Common myeloid progenitor, CD34-positive (primary cell): ENCODE measurements at regions of chr4 and their contacts with region 1.

Region 1: DNA sequence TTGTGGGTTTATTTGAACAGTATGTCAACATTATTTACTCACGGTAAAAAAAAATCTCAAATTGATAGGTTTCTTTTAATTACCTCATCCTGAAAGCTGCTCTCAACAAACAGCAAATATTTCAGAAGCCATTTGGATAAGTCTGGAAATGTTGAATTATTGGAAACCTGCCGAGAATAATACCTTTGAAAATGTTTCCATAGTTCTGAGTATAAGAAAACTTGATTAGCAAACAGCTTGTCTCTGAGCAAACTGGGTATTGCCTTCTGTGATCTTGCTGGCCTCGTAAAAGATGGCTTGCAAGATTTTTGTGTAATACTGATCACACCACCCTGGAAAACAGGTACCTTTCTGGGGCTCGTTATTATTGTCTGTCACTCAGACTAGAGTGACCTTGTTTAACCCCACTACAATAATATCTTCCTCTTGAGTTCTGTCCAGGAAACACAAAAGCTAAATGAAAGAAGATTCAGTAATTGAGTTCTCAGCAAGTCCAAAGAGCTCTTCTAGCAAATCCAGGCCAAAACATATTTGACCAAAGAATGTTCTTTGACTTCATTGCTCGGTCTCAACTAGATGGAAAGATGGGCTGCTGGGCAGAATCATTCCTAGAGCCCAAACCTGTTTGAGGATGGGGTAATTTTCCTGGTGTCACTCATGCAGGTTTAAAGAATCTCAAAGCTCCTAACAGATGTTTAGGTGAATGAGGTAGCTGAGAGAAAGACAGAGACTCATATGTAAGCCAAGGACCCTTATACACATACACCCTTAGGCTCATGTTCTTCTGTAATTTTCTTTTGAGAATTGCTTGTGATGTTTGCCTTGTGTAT is 255.6 kb upstream of the JADE1 start:
- DNase-seq: peak in 1 of 3 donors; percentile 36
- H3K4me3 ChIP-seq: peak overlapping the region in 6 of 7 experiments; percentile 63 to 96 (median 80)
- H3K27ac ChIP-seq: peak overlapping the region in 1 of 2 experiments; percentile 75
- H3K4me1 ChIP-seq: peaks cover 4 to 14% (median 12%) of the 10 kb centered on the region in 4 experiments
- H3K27me3 ChIP-seq: no peaks in the 10 kb centered on the region

Region 2: DNA sequence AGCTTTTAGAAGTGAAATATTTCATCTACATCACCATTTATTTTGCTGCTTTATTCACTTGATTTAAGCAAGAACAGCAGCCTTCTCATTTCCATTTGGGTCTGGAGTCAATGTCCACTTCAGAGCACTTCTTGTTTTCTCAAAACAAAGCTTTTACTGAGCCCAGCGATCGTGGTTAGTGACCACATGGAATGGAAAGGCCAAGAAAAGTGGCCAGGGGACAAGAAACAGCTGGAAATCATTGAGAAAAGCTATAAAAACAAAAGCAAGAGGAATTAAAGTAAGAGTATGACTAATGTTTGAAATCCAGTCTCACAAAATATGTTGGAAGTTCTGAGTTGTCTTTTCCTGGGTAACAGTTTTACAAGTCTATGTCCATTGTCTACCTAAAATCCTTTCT is 1249.5 kb before region 1 on chr4:
- CTCF ChIA-PET with region 1: no interaction called
- POLR2A ChIA-PET with region 1: no interaction called
- DNase-seq: no peak
- H3K4me3 ChIP-seq: no peak overlapping the region
- H3K27ac ChIP-seq: no peak overlapping the region
- H3K4me1 ChIP-seq: no peaks in the 10 kb centered on the region
- H3K27me3 ChIP-seq: no peaks in the 10 kb centered on the region

Region 3: GRCh38 chr4:128538111-128538882 is 15.6 kb before region 1 on chr4:
- CTCF ChIA-PET with region 1: no interaction called
- POLR2A ChIA-PET with region 1: no interaction called
- DNase-seq: no peak
- H3K4me3 ChIP-seq: no peak overlapping the region
- H3K27ac ChIP-seq: no peak overlapping the region
- H3K4me1 ChIP-seq: no peaks in the 10 kb centered on the region
- H3K27me3 ChIP-seq: no peaks in the 10 kb centered on the region

Region 4: GRCh38 chr4:128564081-128564630 is 10.3 kb after region 1 on chr4:
- CTCF ChIA-PET with region 1: interaction called, 11 read pairs
- POLR2A ChIA-PET with region 1: no interaction called
- DNase-seq: no peak
- H3K4me3 ChIP-seq: no peak overlapping the region
- H3K27ac ChIP-seq: no peak overlapping the region
- H3K4me1 ChIP-seq: no peaks in the 10 kb centered on the region
- H3K27me3 ChIP-seq: peaks cover 0 to 2% (median 0%) of the 10 kb centered on the region in 5 experiments